Spleen (tissue), 13 donors: ENCODE measurements at regions of chr1 and their contacts with region 1.

Region 1: GRCh38 chr1:53959664-53960250 is 13.6 kb downstream of the LRRC42 start:
- DNase-seq: no peak
- H3K4me3 ChIP-seq: no peak overlapping the region
- H3K27ac ChIP-seq: no peak overlapping the region
- H3K4me1 ChIP-seq: peaks cover 0 to 20% (median 0%) of the 10 kb centered on the region in 6 donors
- H3K27me3 ChIP-seq: no peaks in the 10 kb centered on the region
- CTCF ChIP-seq: peak; percentile 26 to 65 (median 56)
- POLR2A ChIP-seq: no peak

Region 2: DNA sequence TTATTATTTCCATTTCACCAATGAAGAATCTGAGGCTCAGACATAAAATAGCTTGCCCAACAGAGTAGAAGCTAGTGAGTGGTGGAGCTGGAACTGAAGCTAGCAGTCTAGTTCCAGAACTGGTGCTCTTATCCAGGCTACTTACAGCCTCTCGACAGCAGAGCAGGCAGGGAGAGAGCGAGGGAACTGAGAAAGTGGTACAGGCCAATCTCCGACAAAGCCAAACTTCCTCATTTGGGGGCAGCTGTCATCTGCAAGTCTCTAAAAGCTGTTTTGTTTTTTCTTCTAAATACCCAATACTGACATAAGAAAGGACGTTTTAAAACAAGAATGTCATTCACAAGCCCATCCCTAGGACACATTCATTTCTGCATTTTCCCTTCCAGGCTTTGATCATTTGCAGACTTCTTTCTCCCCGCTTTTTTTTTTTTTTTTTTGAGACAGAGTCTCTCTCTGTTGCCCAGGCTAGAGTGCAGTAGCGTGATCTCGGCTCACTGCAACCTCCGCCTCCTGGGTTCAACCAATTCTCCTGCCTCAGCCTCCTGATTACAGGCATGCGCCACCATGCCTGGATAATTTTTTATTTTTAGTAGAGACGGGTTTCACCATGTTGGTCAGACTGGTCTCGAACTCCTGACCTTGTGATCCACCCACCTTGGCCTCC is 90.2 kb before region 1 on chr1:
- intact Hi-C with region 1: loop called (anchors 5 kb)
- DNase-seq: no peak
- H3K4me3 ChIP-seq: no peak overlapping the region
- H3K27ac ChIP-seq: no peak overlapping the region
- H3K4me1 ChIP-seq: peaks cover 0 to 7% (median 0%) of the 10 kb centered on the region in 6 donors
- H3K27me3 ChIP-seq: no peaks in the 10 kb centered on the region
- CTCF ChIP-seq: no peak
- POLR2A ChIP-seq: no peak

Region 3: GRCh38 chr1:54047384-54048305 is 87.9 kb after region 1 on chr1:
- intact Hi-C with region 1: loop called (anchors 10 kb)
- DNase-seq: no peak
- H3K4me3 ChIP-seq: no peak overlapping the region
- H3K27ac ChIP-seq: peak overlapping the region in 3 of 8 donors; percentile 24 to 34 (median 30)
- H3K4me1 ChIP-seq: peaks cover 48 to 81% (median 63%) of the 10 kb centered on the region in 6 donors
- H3K27me3 ChIP-seq: no peaks in the 10 kb centered on the region
- CTCF ChIP-seq: no peak
- POLR2A ChIP-seq: no peak